ENCODE measurements at regions of chr1 and their contacts with region 1.

Region 1: DNA sequence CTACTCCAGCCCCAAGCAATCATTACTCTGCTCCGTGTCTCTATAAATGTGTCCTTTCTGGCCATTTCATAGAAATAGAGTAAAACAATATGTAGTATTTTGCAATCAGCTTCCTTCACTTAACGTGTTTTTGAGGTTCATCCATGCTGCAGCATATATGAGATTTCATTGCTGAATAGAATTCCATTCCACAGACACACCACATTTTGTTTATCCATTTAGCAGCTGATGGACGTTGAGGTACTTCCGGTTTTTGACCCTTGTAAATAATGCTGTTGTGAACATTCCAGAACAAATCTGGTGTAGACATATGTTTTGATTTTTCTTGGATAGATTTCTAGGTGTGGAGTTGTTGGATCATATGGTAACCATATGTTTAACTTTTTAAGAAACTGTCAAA is 30.7 kb downstream of the ADAM30 start:
- DNase-seq: peak; percentile 93
- ATAC-seq: peak; percentile 85
- H3K4me3 ChIP-seq: no peak overlapping the region
- H3K27ac ChIP-seq: peak overlapping the region; percentile 87; the same call in 1 of the 2 replicates
- H3K4me1 ChIP-seq: peaks cover 18% of the 10 kb centered on the region
- H3K27me3 ChIP-seq: no peaks in the 10 kb centered on the region
- CTCF ChIP-seq: no peak
- POLR2A ChIP-seq: no peak
- RAD21 ChIP-seq: no peak

Region 2: GRCh38 chr1:119617751-119618691 is 247.6 kb before region 1 on chr1:
- CTCF ChIA-PET with region 1: no interaction called
- POLR2A ChIA-PET with region 1: no interaction called
- dilution Hi-C with region 1: no loop called
- in situ Hi-C with region 1: no loop called
- intact Hi-C with region 1: no loop called
- DNase-seq: peak; percentile 17
- ATAC-seq: no peak
- H3K4me3 ChIP-seq: no peak overlapping the region
- H3K27ac ChIP-seq: no peak overlapping the region
- H3K4me1 ChIP-seq: peaks cover 2% of the 10 kb centered on the region; the same call in 1 of the 2 replicates
- H3K27me3 ChIP-seq: no peaks in the 10 kb centered on the region
- CTCF ChIP-seq: no peak
- POLR2A ChIP-seq: no peak
- RAD21 ChIP-seq: no peak

Region 3: DNA sequence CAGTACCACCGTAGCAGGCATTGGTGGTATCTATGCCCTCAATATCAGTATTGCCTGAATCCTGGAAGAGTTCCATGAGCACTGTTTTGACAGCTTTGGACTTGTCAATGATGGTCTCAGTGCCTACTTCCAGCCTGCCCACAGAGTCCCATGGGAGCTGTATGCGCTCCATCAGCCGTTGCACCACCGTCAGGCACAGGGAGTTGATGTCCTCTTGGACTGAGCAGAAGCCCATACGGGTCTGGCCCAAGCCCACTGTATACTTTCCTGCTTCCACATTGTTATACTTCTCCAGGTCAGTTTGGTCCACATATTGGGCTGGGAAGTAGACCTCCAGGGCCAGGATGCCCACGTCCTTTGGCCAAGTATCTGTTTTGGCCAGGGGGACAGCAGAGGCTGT is 101.4 kb before region 1 on chr1:
- CTCF ChIA-PET with region 1: no interaction called
- POLR2A ChIA-PET with region 1: no interaction called
- dilution Hi-C with region 1: no loop called
- in situ Hi-C with region 1: no loop called
- intact Hi-C with region 1: loop called (anchors 5 kb)
- DNase-seq: no peak
- ATAC-seq: no peak
- H3K4me3 ChIP-seq: no peak overlapping the region
- H3K27ac ChIP-seq: no peak overlapping the region
- H3K4me1 ChIP-seq: peaks cover 2% of the 10 kb centered on the region; the same call in 1 of the 2 replicates
- H3K27me3 ChIP-seq: peaks cover 18% of the 10 kb centered on the region
- CTCF ChIP-seq: no peak
- POLR2A ChIP-seq: no peak
- RAD21 ChIP-seq: no peak

Region 4: GRCh38 chr1:119779869-119780356 is 85.7 kb before region 1 on chr1:
- CTCF ChIA-PET with region 1: no interaction called
- POLR2A ChIA-PET with region 1: no interaction called
- dilution Hi-C with region 1: no loop called
- in situ Hi-C with region 1: no loop called
- intact Hi-C with region 1: loop called (anchors 5 kb)
- DNase-seq: peak; percentile 64
- ATAC-seq: peak; percentile 85
- H3K4me3 ChIP-seq: peak overlapping the region; percentile 6; the same call in 1 of the 2 replicates
- H3K27ac ChIP-seq: peak overlapping the region; percentile 62; the same call in 1 of the 2 replicates
- H3K4me1 ChIP-seq: peaks cover 9% of the 10 kb centered on the region
- H3K27me3 ChIP-seq: no peaks in the 10 kb centered on the region
- CTCF ChIP-seq: no peak
- POLR2A ChIP-seq: no peak
- RAD21 ChIP-seq: no peak